K562 (cell line): ENCODE measurements at regions of chr7 and their contacts with region 1.

Region 1: DNA sequence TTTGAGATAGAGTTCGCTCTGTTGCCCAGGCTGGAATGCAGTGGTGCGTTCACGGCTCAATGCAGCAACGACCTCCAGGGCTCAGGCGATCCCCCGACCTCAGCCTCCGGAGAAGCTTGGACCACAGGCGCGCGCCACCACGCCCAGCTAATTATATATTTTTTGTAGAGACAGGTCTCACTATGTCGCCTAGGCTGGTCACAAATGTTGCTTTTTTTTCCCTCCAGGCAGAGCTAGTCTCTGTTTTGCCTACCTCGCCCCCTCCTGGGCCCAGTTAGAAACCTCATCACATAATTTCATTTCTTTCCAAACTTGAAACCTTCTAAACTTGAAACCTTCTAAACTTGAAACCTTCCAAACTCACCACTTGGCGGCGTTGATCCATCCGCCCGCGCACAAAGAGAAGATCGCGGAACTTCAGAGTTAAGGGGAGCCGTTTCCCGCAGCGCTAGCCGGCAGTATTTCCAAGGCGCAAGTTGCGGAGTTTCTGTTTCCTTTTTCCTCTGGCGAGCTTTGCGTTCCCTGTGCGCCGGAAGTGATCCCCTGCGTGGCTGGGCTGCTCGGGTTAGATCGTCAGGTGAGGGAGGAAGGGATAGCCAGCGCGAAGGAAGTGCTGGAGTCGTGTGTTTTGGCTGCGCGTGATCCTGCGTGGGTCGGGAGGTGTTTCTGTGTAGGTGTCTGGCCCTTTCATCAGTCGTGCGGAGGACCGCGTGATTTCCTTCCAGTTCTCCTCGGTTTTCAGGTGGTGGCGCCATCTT is at the start of gene SSBP1:
- DNase-seq: peak; percentile 85 to 99 (median 89)
- ATAC-seq: peak; percentile 89
- H3K4me3 ChIP-seq: peak within 1 kb of the TSS; percentile 65
- H3K27ac ChIP-seq: peak within 1 kb of the TSS; percentile 89
- H3K4me1 ChIP-seq: peaks cover 5 to 12% of the 10 kb centered on the region in 2 experiments; a peak in 4 of 5 replicates
- H3K27me3 ChIP-seq: no peaks in the 10 kb centered on the region
- CTCF ChIP-seq: peak; percentile 96 to 99 (median 98)
- EP300 ChIP-seq: peak; percentile 75
- POLR2A ChIP-seq: peak; percentile 99
- RAD21 ChIP-seq: peak; percentile 47 to 48
- polyA plus RNA-seq, gene SSBP1: 1,649 to 1,996 TPM

Region 2: DNA sequence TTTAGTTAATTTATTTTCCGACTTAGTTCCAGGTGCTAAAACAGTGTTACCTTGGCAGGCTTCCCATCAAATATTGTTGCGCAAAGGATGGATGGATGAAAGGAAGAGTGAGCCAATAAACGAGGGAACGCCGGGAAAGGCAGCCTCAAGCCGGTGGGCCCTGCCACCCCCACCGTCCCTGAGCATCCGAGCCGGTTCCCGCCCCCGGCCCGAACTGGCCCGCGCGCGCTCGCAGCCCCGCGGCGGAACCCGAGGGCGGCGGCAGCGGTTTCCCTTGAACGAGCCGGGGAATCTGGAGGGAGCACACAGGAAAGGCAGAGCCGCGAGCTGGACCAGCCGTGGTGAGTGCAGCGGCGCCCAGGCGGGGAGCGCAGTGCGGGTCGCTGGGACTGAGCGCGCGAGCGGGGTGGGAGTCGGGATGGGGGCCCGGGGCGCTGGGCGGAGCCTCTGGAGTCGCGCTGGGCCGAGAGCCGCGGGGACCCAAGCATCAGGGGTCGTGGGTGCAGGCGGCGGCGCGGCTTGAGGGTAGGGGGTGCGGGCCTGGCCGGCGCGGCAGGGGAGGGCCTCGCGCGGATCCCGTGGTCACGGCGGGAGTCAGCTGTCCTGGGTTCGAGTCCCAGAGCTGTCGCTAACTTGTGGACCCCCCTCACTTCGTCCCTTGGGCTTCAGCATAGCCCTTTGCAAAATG is 186.8 kb before region 1 on chr7 and contains the start of gene AGK:
- CTCF ChIA-PET with region 1: no interaction called
- POLR2A ChIA-PET with region 1: interaction called, 3 read pairs
- in situ Hi-C with region 1: no loop called
- intact Hi-C with region 1: loop called (anchors 5 kb)
- DNase-seq: peak; percentile 91 to 94 (median 92)
- ATAC-seq: peak; percentile 98
- H3K4me3 ChIP-seq: peak within 1 kb of the TSS; percentile 97
- H3K27ac ChIP-seq: peak within 1 kb of the TSS; percentile 61
- H3K4me1 ChIP-seq: peaks cover 8 to 12% of the 10 kb centered on the region in 2 experiments; a peak in 3 of 5 replicates
- H3K27me3 ChIP-seq: no peaks in the 10 kb centered on the region
- CTCF ChIP-seq: no peak
- EP300 ChIP-seq: 0 out of 2 replicates have a peak, but pooled peaks have one; percentile 34
- POLR2A ChIP-seq: peak; percentile 97
- RAD21 ChIP-seq: no peak
- polyA plus RNA-seq, gene AGK: 50.7 to 102 TPM

Region 3: GRCh38 chr7:141906285-141906684 is 168.3 kb after region 1 on chr7:
- CTCF ChIA-PET with region 1: no interaction called
- POLR2A ChIA-PET with region 1: no interaction called
- in situ Hi-C with region 1: no loop called
- intact Hi-C with region 1: no loop called
- DNase-seq: no peak
- ATAC-seq: no peak
- H3K4me3 ChIP-seq: no peak overlapping the region
- H3K27ac ChIP-seq: no peak overlapping the region
- H3K4me1 ChIP-seq: no peaks in the 10 kb centered on the region
- H3K27me3 ChIP-seq: no peaks in the 10 kb centered on the region
- CTCF ChIP-seq: no peak
- EP300 ChIP-seq: no peak
- POLR2A ChIP-seq: no peak
- RAD21 ChIP-seq: no peak